ENCODE measurements at regions of chr10 and their contacts with region 1.

Region 1: DNA sequence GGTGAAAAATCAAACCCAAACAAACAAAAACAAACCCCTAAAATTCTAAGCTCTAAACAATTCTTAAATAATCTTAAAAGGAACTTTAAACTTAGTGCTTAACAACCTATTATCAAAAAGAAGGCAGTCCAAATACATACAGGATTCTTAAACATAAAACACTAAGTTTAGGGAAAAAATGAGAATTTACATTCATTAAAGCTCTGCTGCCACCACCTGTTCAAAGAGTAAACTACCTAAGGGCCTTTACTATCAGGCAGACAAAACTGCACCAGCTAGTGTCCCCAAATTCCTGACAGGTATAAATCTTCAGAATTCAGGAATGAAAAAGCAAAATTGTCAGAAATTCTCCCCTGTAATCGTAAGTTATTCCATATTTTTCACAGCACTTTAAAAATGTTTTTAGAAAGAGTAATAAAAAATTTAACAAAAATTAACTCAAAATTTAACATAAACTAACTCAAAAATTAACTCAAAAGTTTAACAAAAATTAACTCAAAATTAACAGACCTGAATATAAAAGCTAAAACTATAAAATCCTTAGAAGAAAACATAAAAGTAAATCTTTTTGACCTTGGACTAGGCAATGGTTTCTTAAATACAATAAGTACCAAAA is 55.1 kb downstream of the PDZD8 start:
- DNase-seq: no peak
- H3K4me3 Mint-ChIP-seq: no peak overlapping the region
- H3K27ac Mint-ChIP-seq: no peak overlapping the region
- H3K4me1 Mint-ChIP-seq: no peaks in the 10 kb centered on the region
- H3K27me3 Mint-ChIP-seq: no peaks in the 10 kb centered on the region

Region 2: GRCh38 chr10:116753759-116754158 is 566.4 kb before region 1 on chr10:
- intact Hi-C with region 1: no loop called
- DNase-seq: no peak
- H3K4me3 Mint-ChIP-seq: no peak overlapping the region
- H3K27ac Mint-ChIP-seq: no peak overlapping the region
- H3K4me1 Mint-ChIP-seq: no peaks in the 10 kb centered on the region
- H3K27me3 Mint-ChIP-seq: peaks cover 7% of the 10 kb centered on the region

Region 3: DNA sequence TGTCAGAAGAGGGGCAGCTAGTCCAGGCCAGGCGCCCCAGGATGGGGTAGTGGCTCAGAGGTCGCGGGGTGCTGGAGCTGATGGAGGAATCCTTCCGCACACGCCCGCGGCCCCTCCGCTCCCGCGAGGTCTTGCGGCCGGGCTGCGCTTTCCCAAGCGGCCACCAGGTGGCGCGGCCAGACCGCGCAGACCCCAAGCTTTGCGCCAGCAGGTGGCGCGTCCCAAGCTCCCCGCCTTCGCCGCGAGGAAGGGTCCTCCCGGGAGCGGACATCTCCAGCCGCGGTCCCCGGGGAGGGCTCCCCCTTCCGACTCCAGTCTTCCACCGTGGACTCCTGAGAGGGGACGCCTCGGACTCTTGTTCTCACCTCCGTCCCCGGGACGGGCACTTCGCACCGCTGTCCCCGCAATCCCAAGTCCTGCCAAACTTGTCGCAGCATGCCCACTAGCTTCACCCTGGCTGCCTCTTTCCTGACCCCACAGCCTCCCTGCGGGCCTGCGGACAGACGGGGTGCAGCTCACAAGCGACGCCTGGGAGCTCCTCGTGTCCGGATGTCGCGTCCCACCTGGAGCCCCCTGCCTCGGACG is 103.5 kb before region 1 on chr10:
- intact Hi-C with region 1: loop called (anchors 1 kb)
- DNase-seq: peak; percentile 62
- H3K4me3 Mint-ChIP-seq: peak overlapping the region; percentile 73
- H3K27ac Mint-ChIP-seq: no peak overlapping the region
- H3K4me1 Mint-ChIP-seq: no peaks in the 10 kb centered on the region
- H3K27me3 Mint-ChIP-seq: peaks cover 16% of the 10 kb centered on the region

Region 4: DNA sequence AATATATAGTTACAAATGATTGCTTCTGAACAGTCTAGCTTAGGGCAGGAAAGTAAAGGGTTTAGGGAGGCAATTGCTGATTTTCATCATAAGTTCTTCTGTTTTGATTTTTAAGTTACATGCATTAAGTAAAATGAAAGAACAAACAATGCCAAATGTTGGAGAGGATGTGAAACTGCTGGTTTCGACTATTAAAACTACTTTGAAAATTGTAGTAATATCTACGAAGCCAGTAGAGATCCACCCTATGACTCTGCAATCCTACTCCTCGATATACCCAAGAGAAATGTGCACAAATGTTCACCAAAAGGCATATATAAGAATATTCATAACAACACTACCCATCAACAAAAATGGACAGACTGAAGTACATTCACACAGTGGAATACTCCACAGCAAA is 30.8 kb after region 1 on chr10:
- intact Hi-C with region 1: no loop called
- DNase-seq: no peak
- H3K4me3 Mint-ChIP-seq: no peak overlapping the region
- H3K27ac Mint-ChIP-seq: no peak overlapping the region
- H3K4me1 Mint-ChIP-seq: peaks cover 28% of the 10 kb centered on the region
- H3K27me3 Mint-ChIP-seq: no peaks in the 10 kb centered on the region